ENCODE measurements at regions of chr2 and their contacts with region 1.

Region 1: DNA sequence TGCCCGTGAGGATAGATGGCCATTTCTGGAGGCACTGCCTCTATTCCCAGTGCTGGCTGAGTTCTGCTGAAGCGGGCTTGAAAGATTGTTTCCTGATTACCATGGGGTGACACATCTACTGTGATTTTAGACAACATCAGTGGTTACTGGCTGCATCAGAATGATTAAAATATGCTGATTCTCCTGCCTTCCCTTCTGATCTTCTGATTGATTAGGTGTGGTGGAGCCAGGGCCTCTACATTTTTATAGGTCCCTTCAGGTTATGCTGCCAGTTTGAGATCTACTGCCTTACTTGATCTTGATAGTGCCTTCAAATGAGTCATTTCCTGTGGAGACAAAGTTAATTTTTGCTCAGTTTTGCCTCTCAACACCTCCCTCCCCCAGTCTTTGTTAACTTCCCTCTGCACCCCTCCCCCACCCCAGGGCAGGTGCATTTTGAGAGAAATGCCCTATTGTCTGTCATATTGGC is 31.6 kb upstream of the SNORC start:
- DNase-seq: peak; percentile 77
- H3K4me3 Mint-ChIP-seq: no peak overlapping the region
- H3K27ac Mint-ChIP-seq: peak overlapping the region; percentile 78
- H3K4me1 Mint-ChIP-seq: peaks cover 31% of the 10 kb centered on the region
- H3K27me3 Mint-ChIP-seq: no peaks in the 10 kb centered on the region

Region 2: GRCh38 chr2:232781765-232782164 is 56.7 kb before region 1 on chr2:
- CTCF ChIA-PET with region 1: no interaction called
- POLR2A ChIA-PET with region 1: no interaction called
- intact Hi-C with region 1: loop called (anchors 5 kb)
- DNase-seq: peak; percentile 43
- H3K4me3 Mint-ChIP-seq: no peak overlapping the region
- H3K27ac Mint-ChIP-seq: peak overlapping the region; percentile 39
- H3K4me1 Mint-ChIP-seq: peaks cover 11% of the 10 kb centered on the region
- H3K27me3 Mint-ChIP-seq: no peaks in the 10 kb centered on the region

Region 3: DNA sequence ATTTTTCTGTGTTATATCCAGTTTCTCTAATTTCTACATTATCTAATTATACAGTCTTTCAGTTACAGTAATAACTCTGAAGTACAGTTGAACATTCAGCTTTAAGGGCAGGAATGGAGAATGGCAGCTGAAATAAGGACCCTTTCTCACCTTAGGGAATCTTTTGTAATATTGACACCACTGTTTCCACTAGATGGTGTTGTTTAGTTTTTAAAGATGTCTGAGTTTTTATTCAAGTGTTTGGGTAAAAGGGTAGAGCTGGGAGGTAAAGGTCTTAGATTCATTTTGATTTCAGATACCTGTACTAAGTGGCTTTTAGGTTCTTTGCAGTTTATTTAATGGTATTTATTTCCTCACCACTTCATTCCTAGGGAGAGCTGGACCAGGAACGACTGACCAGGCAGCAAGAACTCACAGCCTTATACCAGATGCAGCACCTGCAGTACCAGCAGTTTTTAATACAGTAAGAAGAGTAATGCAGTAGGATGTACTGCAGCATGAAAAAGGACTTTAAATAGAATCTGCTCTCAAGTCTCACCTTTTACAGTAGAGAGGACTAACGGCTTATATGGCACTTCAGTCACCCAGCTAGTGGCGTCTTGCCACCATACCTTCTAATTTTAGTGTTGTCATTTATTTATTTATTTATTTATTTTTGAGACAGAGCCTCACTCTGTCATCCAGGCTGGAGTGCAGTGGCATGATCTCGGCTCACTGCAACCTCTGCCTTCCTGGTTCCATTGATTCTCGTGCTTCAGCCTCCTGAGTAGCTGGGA is 28.9 kb before region 1 on chr2:
- CTCF ChIA-PET with region 1: no interaction called
- POLR2A ChIA-PET with region 1: no interaction called
- intact Hi-C with region 1: no loop called
- DNase-seq: no peak
- H3K4me3 Mint-ChIP-seq: no peak overlapping the region
- H3K27ac Mint-ChIP-seq: no peak overlapping the region
- H3K4me1 Mint-ChIP-seq: peaks cover 2% of the 10 kb centered on the region
- H3K27me3 Mint-ChIP-seq: no peaks in the 10 kb centered on the region

Measured in activated CD4-positive, alpha-beta memory T cell treated with anti-CD3 and anti-CD28 coated beads for 36 hours (primary cell).